Heart left ventricle (tissue), 16 donors: ENCODE measurements at regions of chr4 and their contacts with region 1.

Region 1: GRCh38 chr4:173013232-173013930 is 155.2 kb upstream of the GALNT7 start:
- DNase-seq: peak in 1 of 5 donors; percentile 23
- ATAC-seq: peak in 3 of 4 donors; percentile 46 to 71 (median 64)
- H3K4me3 ChIP-seq: no peak overlapping the region
- H3K27ac ChIP-seq: no peak overlapping the region
- H3K4me1 ChIP-seq: peaks cover 0 to 5% (median 0%) of the 10 kb centered on the region in 12 donors
- H3K27me3 ChIP-seq: no peaks in the 10 kb centered on the region
- CTCF ChIP-seq: peak; percentile 56 to 92 (median 70)
- POLR2A ChIP-seq: no peak

Region 2: DNA sequence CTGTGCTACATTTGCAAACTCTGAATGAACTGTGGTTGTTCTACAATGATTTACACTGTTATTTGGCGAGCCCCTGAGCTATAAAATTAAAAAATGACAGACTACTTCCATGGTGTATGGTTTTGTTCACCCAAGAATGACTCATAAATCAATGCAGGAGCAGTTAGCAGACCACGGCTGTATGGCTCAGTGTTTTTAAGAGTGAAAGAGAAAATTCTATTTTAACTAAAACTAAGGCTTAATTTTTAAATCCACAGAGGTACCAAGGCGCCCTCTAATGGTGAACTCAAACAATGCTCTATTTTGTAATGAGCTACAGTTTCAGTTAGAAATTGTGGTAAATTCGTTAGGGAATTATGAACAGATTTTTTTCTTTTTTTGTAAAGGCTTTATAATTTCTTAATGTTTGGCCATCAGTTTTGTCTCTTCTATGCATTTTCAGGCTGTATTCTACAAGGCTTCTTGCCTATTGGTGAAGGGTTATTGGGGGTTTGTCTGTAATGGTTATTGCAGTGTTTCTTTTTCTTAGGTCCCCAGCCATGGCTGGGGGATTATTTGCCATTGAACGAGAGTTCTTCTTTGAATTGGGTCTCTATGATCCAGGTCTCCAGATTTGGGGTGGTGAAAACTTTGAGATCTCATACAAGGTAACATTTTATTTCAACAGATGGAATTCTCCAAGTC is 288.3 kb after region 1 on chr4:
- intact Hi-C with region 1: loop called in 3 of 10 experiments (anchors 2 to 5 kb)
- DNase-seq: no peak
- ATAC-seq: peak in 1 of 4 donors; percentile 38
- H3K4me3 ChIP-seq: no peak overlapping the region
- H3K27ac ChIP-seq: no peak overlapping the region
- H3K4me1 ChIP-seq: no peaks in the 10 kb centered on the region
- H3K27me3 ChIP-seq: no peaks in the 10 kb centered on the region
- CTCF ChIP-seq: peak; percentile 56 to 81 (median 74)
- POLR2A ChIP-seq: no peak